Activated CD4-positive, alpha-beta T cell treated with anti-CD3 and anti-CD28 coated beads for 36 hours (primary cell): ENCODE measurements at regions of chr14 and their contacts with region 1.

Region 1: GRCh38 chr14:106228541-106229158 is 702.3 kb downstream of the TMEM121 start:
- DNase-seq: peak; percentile 64
- ATAC-seq: peak; percentile 88
- H3K4me3 Mint-ChIP-seq: peak overlapping the region; percentile 64
- H3K27ac Mint-ChIP-seq: peak overlapping the region; percentile 98
- H3K4me1 Mint-ChIP-seq: peaks cover 67% of the 10 kb centered on the region
- H3K27me3 Mint-ChIP-seq: no peaks in the 10 kb centered on the region

Region 2: DNA sequence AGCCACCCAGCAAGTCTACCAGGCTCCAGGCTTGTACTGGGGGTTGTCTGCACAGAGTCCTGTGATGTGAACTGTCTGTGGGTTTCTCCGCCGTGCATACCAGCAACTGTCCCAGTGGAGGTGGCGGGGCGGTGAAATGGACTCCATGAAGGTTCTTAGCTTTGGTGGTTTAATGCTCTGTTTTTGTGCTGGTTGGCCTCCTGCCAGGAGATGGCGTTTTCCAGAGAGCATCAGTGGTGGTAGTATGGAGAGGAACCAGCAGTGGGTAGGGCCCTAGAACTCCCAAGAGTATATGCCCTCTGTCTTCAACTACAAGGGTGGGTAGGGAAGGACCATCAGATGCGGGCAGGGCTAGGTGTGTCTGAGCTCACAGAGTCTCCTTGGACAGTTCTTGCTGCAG is 398.5 kb before region 1 on chr14:
- CTCF ChIA-PET with region 1: no interaction called
- POLR2A ChIA-PET with region 1: no interaction called
- intact Hi-C with region 1: no loop called
- DNase-seq: peak; percentile 18
- ATAC-seq: no peak
- H3K4me3 Mint-ChIP-seq: no peak overlapping the region
- H3K27ac Mint-ChIP-seq: no peak overlapping the region
- H3K4me1 Mint-ChIP-seq: no peaks in the 10 kb centered on the region
- H3K27me3 Mint-ChIP-seq: peaks cover 33% of the 10 kb centered on the region

Region 3: DNA sequence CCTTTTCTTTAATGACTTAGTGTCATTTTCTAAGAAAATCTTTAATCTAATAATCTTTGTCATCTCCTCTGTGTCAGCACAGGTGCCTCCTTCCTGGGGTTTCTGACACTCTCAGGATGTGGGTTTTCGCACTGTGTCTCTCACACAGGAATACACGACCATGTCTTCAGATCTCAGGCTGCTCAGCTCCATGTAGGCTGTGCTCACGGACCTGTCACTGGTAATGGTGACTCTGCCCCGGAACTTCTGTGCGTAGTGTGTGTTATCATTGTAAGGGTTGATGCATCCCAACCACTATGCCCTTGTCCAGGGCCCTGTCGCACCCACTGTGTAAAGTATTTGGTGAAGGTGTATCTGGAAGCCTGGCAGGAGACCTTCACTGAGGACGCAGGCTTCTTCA is 54.4 kb before region 1 on chr14:
- CTCF ChIA-PET with region 1: interaction called, 11 read pairs
- POLR2A ChIA-PET with region 1: no interaction called
- intact Hi-C with region 1: no loop called
- DNase-seq: peak; percentile 71
- ATAC-seq: peak; percentile 68
- H3K4me3 Mint-ChIP-seq: no peak overlapping the region
- H3K27ac Mint-ChIP-seq: peak overlapping the region; percentile 4
- H3K4me1 Mint-ChIP-seq: peaks cover 61% of the 10 kb centered on the region
- H3K27me3 Mint-ChIP-seq: no peaks in the 10 kb centered on the region

Region 4: GRCh38 chr14:106185837-106186233 is 42.8 kb before region 1 on chr14:
- CTCF ChIA-PET with region 1: interaction called, 13 read pairs
- POLR2A ChIA-PET with region 1: no interaction called
- intact Hi-C with region 1: no loop called
- DNase-seq: peak; percentile 85
- ATAC-seq: peak; percentile 79
- H3K4me3 Mint-ChIP-seq: no peak overlapping the region
- H3K27ac Mint-ChIP-seq: peak overlapping the region; percentile 19
- H3K4me1 Mint-ChIP-seq: peaks cover 34% of the 10 kb centered on the region
- H3K27me3 Mint-ChIP-seq: no peaks in the 10 kb centered on the region

Region 5: GRCh38 chr14:106210652-106211051 is 18.0 kb before region 1 on chr14:
- CTCF ChIA-PET with region 1: interaction called, 14 read pairs
- POLR2A ChIA-PET with region 1: no interaction called
- intact Hi-C with region 1: no loop called
- DNase-seq: peak; percentile 70
- ATAC-seq: peak; percentile 74
- H3K4me3 Mint-ChIP-seq: no peak overlapping the region
- H3K27ac Mint-ChIP-seq: no peak overlapping the region
- H3K4me1 Mint-ChIP-seq: peaks cover 10% of the 10 kb centered on the region
- H3K27me3 Mint-ChIP-seq: peaks cover 2% of the 10 kb centered on the region

Region 6: GRCh38 chr14:106277503-106277902 is 48.9 kb after region 1 on chr14:
- CTCF ChIA-PET with region 1: interaction called, 17 read pairs
- POLR2A ChIA-PET with region 1: no interaction called
- intact Hi-C with region 1: no loop called
- DNase-seq: peak; percentile 66
- ATAC-seq: peak; percentile 51
- H3K4me3 Mint-ChIP-seq: peak overlapping the region; percentile 56
- H3K27ac Mint-ChIP-seq: no peak overlapping the region
- H3K4me1 Mint-ChIP-seq: peaks cover 34% of the 10 kb centered on the region
- H3K27me3 Mint-ChIP-seq: peaks cover 2% of the 10 kb centered on the region

Region 7: DNA sequence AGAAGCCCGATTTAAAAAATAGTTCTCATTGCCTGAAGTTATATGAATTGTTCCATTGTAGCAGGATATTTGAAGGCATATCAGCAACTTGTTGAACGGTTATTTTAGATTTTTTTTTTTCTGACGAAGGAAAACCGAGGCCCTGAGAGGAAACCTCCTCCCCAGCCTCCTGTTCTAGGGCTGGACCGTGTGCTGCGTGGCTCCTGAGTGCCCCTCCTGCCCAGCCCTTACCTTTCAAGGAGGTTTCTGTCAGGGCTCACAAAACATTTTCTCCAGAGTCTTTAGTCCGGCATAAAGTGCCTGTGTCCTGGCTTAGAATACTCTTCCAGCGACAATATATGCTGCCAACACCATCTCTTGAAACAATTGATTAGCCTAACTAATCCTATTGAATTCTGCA is 283.9 kb after region 1 on chr14:
- CTCF ChIA-PET with region 1: no interaction called
- POLR2A ChIA-PET with region 1: no interaction called
- intact Hi-C with region 1: no loop called
- DNase-seq: no peak
- ATAC-seq: no peak
- H3K4me3 Mint-ChIP-seq: no peak overlapping the region
- H3K27ac Mint-ChIP-seq: no peak overlapping the region
- H3K4me1 Mint-ChIP-seq: peaks cover 61% of the 10 kb centered on the region
- H3K27me3 Mint-ChIP-seq: no peaks in the 10 kb centered on the region

Region 8: GRCh38 chr14:106586098-106586704 is 357.6 kb after region 1 on chr14:
- CTCF ChIA-PET with region 1: no interaction called
- POLR2A ChIA-PET with region 1: no interaction called
- intact Hi-C with region 1: no loop called
- DNase-seq: peak; percentile 86
- ATAC-seq: peak; percentile 97
- H3K4me3 Mint-ChIP-seq: no peak overlapping the region
- H3K27ac Mint-ChIP-seq: no peak overlapping the region
- H3K4me1 Mint-ChIP-seq: peaks cover 1% of the 10 kb centered on the region
- H3K27me3 Mint-ChIP-seq: peaks cover 7% of the 10 kb centered on the region